CD14-positive monocyte (primary cell): ENCODE measurements at regions of chr2 and their contacts with region 1.

Region 1: GRCh38 chr2:46470114-46470628 is 9.2 kb upstream of the TMEM247 start:
- DNase-seq: peak; percentile 83 to 94 (median 86)
- H3K4me3 ChIP-seq: peak overlapping the region in 1 of 3 experiments; percentile 15
- H3K4me3 Mint-ChIP-seq: peak overlapping the region; percentile 33 to 67
- H3K27ac ChIP-seq: peak overlapping the region; percentile 64 to 78
- H3K27ac Mint-ChIP-seq: peak overlapping the region; percentile 82 to 95 (median 93)
- H3K4me1 ChIP-seq: peaks cover 23% of the 10 kb centered on the region in 2 donors
- H3K4me1 Mint-ChIP-seq: peaks cover 23% of the 10 kb centered on the region
- H3K27me3 ChIP-seq: no peaks in the 10 kb centered on the region
- H3K27me3 Mint-ChIP-seq: peaks cover 2% of the 10 kb centered on the region in 3 donors
- CTCF ChIP-seq: no peak

Region 2: DNA sequence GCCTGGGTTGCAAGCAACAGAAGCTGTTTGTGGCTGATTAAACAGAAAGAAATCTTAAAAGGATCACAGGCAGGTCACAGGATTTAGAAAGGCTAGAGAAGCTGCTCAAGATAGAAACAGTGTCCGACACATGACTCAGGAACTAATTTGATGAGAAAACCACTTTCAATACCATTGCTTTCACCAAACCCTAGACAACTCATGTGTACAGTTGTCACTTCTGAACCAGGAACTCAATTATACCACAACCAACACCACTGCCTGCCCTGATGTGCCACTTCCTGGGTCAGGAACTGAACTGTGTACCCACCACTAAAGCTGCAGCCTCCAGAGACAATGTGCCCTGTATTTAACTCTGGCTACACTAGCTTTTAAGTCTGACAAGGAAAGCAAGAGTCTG is 65.2 kb after region 1 on chr2:
- intact Hi-C with region 1: loop called in 1 of 2 experiments (anchors 2 kb)
- DNase-seq: peak in 2 of 3 donors; percentile 64 to 72
- H3K4me3 ChIP-seq: peak overlapping the region in 1 of 3 experiments; percentile 55
- H3K4me3 Mint-ChIP-seq: peak overlapping the region; percentile 24 to 33
- H3K27ac ChIP-seq: peak overlapping the region; percentile 34 to 82
- H3K27ac Mint-ChIP-seq: peak overlapping the region; percentile 85 to 97 (median 93)
- H3K4me1 ChIP-seq: peaks cover 60 to 66% of the 10 kb centered on the region in 2 donors
- H3K4me1 Mint-ChIP-seq: peaks cover 63% of the 10 kb centered on the region
- H3K27me3 ChIP-seq: no peaks in the 10 kb centered on the region
- H3K27me3 Mint-ChIP-seq: peaks cover 0 to 5% (median 3%) of the 10 kb centered on the region in 3 donors
- CTCF ChIP-seq: no peak